Activated B cell treated with CpG ODN at 0.5 μM for 24 hours (primary cell): ENCODE measurements at regions of chr6 and their contacts with region 1.

Region 1: DNA sequence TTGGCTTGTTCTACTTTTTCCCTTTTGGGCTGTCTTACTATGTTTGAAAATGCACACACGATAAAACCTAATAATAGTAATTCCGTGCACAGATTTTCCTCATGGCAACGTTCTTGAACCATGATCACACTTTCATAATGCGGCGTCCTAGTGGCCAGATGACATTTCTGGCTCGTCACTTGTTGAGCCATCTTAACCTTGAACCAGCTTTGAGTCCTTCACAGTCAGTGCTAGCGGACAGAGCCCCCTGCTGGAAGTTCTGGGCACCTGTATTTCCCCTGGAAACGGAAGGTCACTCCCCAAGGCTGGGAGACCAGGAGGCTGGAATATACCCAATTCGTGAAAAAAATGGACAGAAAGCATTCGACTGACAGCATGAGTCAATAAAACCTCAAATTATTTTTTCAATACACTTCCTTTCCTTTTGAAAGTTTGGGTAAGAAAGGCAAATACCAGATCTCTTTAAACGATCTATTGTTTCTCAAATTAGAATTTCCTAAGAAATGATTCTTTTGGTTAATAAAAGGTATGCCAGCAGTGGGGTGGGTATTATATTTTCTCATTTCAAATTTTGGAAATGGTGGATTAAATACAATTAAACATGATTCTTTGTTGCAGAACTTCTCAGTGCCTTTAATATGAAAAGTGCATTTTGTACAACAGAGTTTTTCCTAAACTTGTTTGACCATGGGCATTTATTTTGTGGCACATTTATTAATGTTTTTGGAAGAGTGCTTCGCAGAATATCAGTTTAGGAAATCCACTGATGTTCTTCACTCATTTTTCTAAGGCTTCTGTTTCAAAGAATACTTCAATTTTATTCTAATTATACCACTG is 542.3 kb downstream of the QKI start:
- DNase-seq: peak; percentile 53
- ATAC-seq: peak; percentile 88
- H3K4me3 Mint-ChIP-seq: no peak overlapping the region
- H3K27ac Mint-ChIP-seq: no peak overlapping the region
- H3K4me1 Mint-ChIP-seq: peaks cover 5% of the 10 kb centered on the region
- H3K27me3 Mint-ChIP-seq: peaks cover 20% of the 10 kb centered on the region
- CTCF ChIP-seq: no peak

Region 2: DNA sequence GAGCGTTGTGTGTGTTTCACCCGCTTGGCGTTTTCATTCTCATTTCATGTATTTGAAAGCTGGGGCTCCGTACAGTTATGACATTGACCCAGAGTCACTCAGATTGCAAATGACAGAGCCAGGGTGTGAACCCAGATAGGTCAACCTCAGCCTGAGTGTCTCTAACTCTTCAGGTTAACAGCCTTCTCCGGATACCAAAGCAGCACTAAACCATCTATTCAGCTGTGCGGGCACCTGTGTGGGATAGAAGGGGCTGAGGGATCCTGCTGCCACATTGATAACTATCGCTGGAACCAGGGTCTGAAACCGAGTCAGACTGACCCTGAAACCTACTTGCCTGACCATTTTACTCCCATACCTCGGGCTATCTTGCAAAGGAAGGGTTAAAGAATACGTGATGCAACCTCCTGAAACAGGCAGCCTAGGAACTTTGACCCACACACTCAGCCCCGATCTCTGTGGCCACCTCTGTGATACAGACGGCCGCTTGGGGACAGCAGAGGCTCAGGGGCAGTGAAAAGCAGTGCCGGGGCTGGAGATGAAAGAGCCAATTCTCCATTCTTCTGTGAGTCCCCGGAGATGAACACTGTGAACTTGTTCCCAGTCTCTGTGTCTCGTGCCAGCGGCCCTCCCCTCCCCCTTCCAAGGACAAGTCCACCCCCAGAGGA is 775.8 kb before region 1 on chr6:
- CTCF ChIA-PET with region 1: interaction called, 3 read pairs
- POLR2A ChIA-PET with region 1: no interaction called
- intact Hi-C with region 1: loop called (anchors 1 kb)
- DNase-seq: no peak
- ATAC-seq: no peak
- H3K4me3 Mint-ChIP-seq: no peak overlapping the region
- H3K27ac Mint-ChIP-seq: no peak overlapping the region
- H3K4me1 Mint-ChIP-seq: no peaks in the 10 kb centered on the region
- H3K27me3 Mint-ChIP-seq: peaks cover 3% of the 10 kb centered on the region
- CTCF ChIP-seq: no peak

Region 3: DNA sequence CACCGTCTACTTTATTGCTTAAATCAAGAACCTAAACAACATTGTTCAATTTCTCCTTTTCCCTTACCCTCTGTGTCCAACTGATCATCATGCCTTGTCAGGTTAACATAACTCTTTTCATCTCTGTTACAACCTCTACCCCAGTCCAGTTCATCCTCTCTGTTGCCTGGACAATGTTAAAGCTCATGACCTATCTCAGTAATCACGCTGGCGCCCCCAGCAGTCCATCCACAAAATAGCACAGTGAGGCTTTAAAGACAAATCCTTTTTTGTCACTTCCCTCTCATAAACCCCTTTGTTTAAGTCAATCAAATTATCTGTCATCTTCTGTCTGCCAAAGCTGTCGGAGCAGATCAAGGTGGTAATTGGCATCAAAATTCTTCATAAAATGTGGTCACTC is 402.1 kb before region 1 on chr6:
- CTCF ChIA-PET with region 1: no interaction called
- POLR2A ChIA-PET with region 1: no interaction called
- intact Hi-C with region 1: loop called (anchors 10 kb)
- DNase-seq: no peak
- ATAC-seq: no peak
- H3K4me3 Mint-ChIP-seq: no peak overlapping the region
- H3K27ac Mint-ChIP-seq: no peak overlapping the region
- H3K4me1 Mint-ChIP-seq: no peaks in the 10 kb centered on the region
- H3K27me3 Mint-ChIP-seq: no peaks in the 10 kb centered on the region
- CTCF ChIP-seq: peak; percentile 17

Region 4: GRCh38 chr6:163711615-163712565 is 244.9 kb before region 1 on chr6:
- CTCF ChIA-PET with region 1: interaction called, 3 read pairs
- POLR2A ChIA-PET with region 1: no interaction called
- intact Hi-C with region 1: loop called (anchors 5 kb)
- DNase-seq: peak; percentile 48
- ATAC-seq: peak; percentile 72
- H3K4me3 Mint-ChIP-seq: peak overlapping the region; percentile 63
- H3K27ac Mint-ChIP-seq: peak overlapping the region; percentile 74
- H3K4me1 Mint-ChIP-seq: peaks cover 86% of the 10 kb centered on the region
- H3K27me3 Mint-ChIP-seq: no peaks in the 10 kb centered on the region
- CTCF ChIP-seq: no peak